Activated T-helper 2 cell treated with anti-CD3 and anti-CD28 coated beads, Interferon-gamma antibody, Interleukin-2, Interleukin-4, amounts not matched to agents 10 μg/mL and 5 μg/mL and 100 μg/mL, durations not matched to agents 14 hours and 24 hours and 36 hours (primary cell): ENCODE measurements at regions of chr1 and their contacts with region 1.

Region 1: DNA sequence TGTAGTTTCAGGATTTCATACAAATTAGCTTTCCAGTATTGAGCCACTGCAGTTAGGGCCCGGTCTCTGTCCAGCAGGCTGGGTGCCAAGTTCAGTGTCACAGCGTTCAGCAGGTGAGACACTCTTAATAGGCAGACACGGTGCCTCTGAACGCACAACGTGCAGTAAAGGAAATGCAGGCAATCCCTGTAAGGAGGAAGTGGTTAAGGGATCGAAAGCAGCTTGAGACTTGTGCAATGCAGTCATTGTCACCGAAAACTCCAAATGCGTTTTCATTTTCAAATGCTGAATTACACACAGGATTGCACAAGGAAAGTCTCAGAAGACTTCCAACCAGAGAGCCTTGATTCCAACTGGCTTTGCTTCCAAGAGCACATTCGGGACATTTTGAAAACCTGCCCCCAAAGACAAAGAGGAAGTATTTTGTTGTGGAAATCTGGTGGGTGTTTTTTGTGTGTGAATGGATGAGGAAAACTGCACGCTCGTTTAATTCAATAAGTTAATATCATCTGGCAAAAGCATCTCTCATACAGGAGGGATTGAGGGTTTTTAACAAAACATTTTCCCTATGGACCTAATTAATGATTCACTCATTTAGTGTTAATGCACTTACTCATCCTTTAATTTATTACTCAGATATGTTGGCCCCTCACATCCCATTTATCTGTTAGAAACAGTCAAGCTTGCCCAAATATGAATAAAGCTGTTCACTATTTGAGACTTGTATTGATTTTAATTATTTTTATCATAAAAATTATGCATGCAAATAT is 61.6 kb downstream of the PTGS2 start:
- DNase-seq: peak; percentile 45
- H3K4me3 Mint-ChIP-seq: peak overlapping the region; percentile 66
- H3K27ac Mint-ChIP-seq: peak overlapping the region; percentile 15
- H3K4me1 Mint-ChIP-seq: peaks cover 45% of the 10 kb centered on the region
- H3K27me3 Mint-ChIP-seq: peaks cover 9% of the 10 kb centered on the region

Region 2: DNA sequence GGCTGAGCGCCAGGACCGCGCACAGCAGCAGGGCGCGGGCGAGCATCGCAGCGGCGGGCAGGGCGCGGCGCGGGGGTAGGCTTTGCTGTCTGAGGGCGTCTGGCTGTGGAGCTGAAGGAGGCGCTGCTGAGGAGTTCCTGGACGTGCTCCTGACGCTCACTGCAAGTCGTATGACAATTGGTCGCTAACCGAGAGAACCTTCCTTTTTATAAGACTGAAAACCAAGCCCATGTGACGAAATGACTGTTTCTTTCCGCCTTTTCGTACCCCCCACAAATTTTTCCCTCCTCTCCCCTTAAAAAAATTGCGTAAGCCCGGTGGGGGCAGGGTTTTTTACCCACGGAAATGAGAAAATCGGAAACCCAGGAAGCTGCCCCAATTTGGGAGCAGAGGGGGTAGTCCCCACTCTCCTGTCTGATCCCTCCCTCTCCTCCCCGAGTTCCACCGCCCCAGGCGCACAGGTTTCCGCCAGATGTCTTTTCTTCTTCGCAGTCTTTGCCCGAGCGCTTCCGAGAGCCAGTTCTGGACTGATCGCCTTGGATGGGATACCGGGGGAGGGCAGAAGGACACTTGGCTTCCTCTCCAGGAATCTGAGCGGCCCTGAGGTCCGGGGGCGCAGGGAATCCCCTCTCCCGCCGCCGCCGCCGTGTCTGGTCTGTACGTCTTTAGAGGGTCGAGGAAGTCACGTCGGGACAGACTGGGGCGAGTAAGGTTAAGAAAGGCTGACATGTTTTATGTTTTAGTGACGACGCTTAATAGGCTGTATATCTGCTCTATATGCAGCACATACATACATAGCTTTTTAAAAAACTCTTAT is 61.9 kb after region 1 on chr1 and contains the start of gene PTGS2:
- intact Hi-C with region 1: loop called (anchors 5 kb)
- DNase-seq: peak; percentile 62
- H3K4me3 Mint-ChIP-seq: peak within 1 kb of the TSS; percentile 87
- H3K27ac Mint-ChIP-seq: peak within 1 kb of the TSS; percentile 83
- H3K4me1 Mint-ChIP-seq: peaks cover 18% of the 10 kb centered on the region
- H3K27me3 Mint-ChIP-seq: peaks cover 49% of the 10 kb centered on the region
- total RNA-seq, gene PTGS2: 109 and 112 TPM in 2 replicates